Activated CD4-positive, alpha-beta T cell treated with anti-CD3 and anti-CD28 coated beads for 36 hours (primary cell): ENCODE measurements at regions of chr3 and their contacts with region 1.

Region 1: DNA sequence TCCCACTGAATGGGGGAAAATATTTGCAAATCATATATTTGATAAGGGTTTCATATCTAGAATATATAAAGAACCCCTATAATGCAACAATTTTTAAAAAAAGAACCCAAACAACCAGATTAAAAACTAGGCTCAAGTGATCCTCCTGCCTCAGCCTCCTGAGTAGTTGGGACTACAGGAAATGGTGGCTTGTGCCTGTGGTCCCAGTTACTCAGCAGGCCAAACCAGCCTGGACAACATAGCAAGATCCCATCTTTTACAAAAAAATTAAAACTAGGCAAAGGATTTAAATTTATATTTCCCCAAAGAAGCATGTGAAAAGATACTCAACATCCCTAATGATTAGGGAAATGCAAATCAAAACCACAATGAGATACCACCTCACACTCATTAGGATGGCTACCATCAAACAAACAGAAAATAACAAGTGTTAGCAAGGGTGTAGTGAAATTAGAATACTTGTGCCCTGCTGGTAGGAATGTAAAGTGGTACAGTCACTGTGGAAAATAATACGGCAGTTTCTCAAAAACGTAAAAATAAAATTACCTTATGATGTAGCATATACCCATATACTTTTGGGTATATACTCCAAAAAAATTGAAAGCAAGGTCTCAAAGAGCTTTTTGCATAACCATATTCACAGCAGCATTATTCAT is 19.7 kb downstream of the TFDP2 start:
- DNase-seq: no peak
- ATAC-seq: no peak
- H3K4me3 Mint-ChIP-seq: no peak overlapping the region
- H3K27ac Mint-ChIP-seq: no peak overlapping the region
- H3K4me1 Mint-ChIP-seq: no peaks in the 10 kb centered on the region
- H3K27me3 Mint-ChIP-seq: no peaks in the 10 kb centered on the region

Region 2: GRCh38 chr3:141959921-141960554 is 169.6 kb before region 1 on chr3:
- CTCF ChIA-PET with region 1: interaction called, 3 read pairs
- POLR2A ChIA-PET with region 1: no interaction called
- intact Hi-C with region 1: loop called in 1 of 2 experiments (anchors 10 kb)
- DNase-seq: no peak
- ATAC-seq: no peak
- H3K4me3 Mint-ChIP-seq: no peak overlapping the region
- H3K27ac Mint-ChIP-seq: no peak overlapping the region
- H3K4me1 Mint-ChIP-seq: peaks cover 3% of the 10 kb centered on the region
- H3K27me3 Mint-ChIP-seq: no peaks in the 10 kb centered on the region

Region 3: DNA sequence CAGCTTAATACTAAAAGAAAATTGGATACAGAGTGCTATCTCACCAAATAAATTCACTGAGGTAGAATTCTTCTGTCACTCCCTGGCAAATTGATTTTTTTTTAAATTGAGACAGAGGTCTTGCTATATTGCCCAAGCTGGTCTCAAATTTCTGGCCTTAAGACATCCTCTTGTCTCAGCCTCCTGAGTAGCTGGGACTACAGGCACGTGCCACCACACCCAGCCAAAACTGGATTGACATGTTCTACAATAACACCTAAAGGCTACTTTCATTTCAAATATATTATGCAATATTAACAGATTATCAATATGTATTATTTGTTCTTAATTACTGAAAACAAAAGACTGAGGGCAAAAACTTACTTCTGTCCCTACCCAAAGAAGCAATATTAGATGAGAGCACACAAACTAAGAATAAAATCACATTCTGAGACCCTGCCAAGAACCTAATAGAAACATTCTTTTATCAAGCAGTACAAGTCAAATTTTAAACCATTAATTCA is 17.0 kb before region 1 on chr3:
- CTCF ChIA-PET with region 1: interaction called, 10 read pairs
- POLR2A ChIA-PET with region 1: no interaction called
- intact Hi-C with region 1: no loop called
- DNase-seq: no peak
- ATAC-seq: no peak
- H3K4me3 Mint-ChIP-seq: no peak overlapping the region
- H3K27ac Mint-ChIP-seq: no peak overlapping the region
- H3K4me1 Mint-ChIP-seq: peaks cover 14% of the 10 kb centered on the region
- H3K27me3 Mint-ChIP-seq: no peaks in the 10 kb centered on the region